Calu3 (cell line): ENCODE measurements at regions of chr3 and their contacts with region 1.

Region 1: DNA sequence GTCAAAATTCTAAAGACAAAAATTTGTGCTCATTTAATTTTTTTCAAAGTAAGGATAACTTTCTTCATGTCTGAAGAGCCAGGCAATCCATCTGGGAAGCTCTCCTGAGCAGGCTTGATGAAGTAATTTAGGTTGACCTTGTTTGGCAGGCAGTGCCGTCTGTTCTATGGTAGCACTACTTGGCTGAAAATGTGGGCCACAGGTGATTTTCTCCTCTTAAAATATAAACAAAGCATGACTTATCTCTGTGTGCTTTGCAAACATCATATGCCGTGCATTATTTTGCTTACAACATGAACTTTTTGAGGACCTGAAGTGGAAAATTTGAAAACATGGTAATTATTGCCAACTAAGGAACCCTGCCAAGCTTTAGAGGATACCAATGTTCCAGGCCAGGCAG is 143.2 kb downstream of the RAP2B start:
- DNase-seq: no peak
- H3K4me3 Mint-ChIP-seq: no peak overlapping the region
- H3K27ac Mint-ChIP-seq: no peak overlapping the region
- H3K4me1 Mint-ChIP-seq: no peaks in the 10 kb centered on the region
- H3K27me3 Mint-ChIP-seq: no peaks in the 10 kb centered on the region
- CTCF ChIP-seq: no peak

Region 2: GRCh38 chr3:153242896-153243295 is 62.3 kb before region 1 on chr3:
- CTCF ChIA-PET with region 1: no interaction called
- intact Hi-C with region 1: no loop called
- DNase-seq: no peak
- H3K4me3 Mint-ChIP-seq: no peak overlapping the region
- H3K27ac Mint-ChIP-seq: no peak overlapping the region
- H3K4me1 Mint-ChIP-seq: no peaks in the 10 kb centered on the region
- H3K27me3 Mint-ChIP-seq: no peaks in the 10 kb centered on the region
- CTCF ChIP-seq: no peak

Region 3: GRCh38 chr3:153495422-153495821 is 190.2 kb after region 1 on chr3:
- CTCF ChIA-PET with region 1: no interaction called
- intact Hi-C with region 1: loop called (anchors 5 kb)
- DNase-seq: no peak
- H3K4me3 Mint-ChIP-seq: no peak overlapping the region
- H3K27ac Mint-ChIP-seq: no peak overlapping the region
- H3K4me1 Mint-ChIP-seq: no peaks in the 10 kb centered on the region
- H3K27me3 Mint-ChIP-seq: no peaks in the 10 kb centered on the region
- CTCF ChIP-seq: no peak